PC-9 (cell line): ENCODE measurements at regions of chr6 and their contacts with region 1.

Region 1: GRCh38 chr6:157756708-157757429 is 66.2 kb upstream of the SNX9 start:
- DNase-seq: peak; percentile 43 to 73
- H3K4me3 ChIP-seq: no peak overlapping the region
- H3K27ac ChIP-seq: no peak overlapping the region
- H3K4me1 ChIP-seq: peaks cover 39% of the 10 kb centered on the region
- H3K27me3 ChIP-seq: no peaks in the 10 kb centered on the region
- CTCF ChIP-seq: peak; percentile 87

Region 2: GRCh38 chr6:157323255-157323965 is 433.5 kb before region 1 on chr6 and contains the start of gene TMEM242:
- CTCF ChIA-PET with region 1: interaction called, 16 read pairs
- POLR2A ChIA-PET with region 1: no interaction called
- intact Hi-C with region 1: loop called (anchors 10 kb)
- DNase-seq: peak; percentile 81 to 90
- H3K4me3 ChIP-seq: peak within 1 kb of the TSS; percentile 97
- H3K27ac ChIP-seq: peak within 1 kb of the TSS; percentile 64
- H3K4me1 ChIP-seq: peaks cover 23% of the 10 kb centered on the region
- H3K27me3 ChIP-seq: no peaks in the 10 kb centered on the region
- CTCF ChIP-seq: peak; percentile 51; the same call in 1 of the 2 replicates
- total RNA-seq, gene TMEM242: 8.1 and 8.7 TPM in 2 replicates

Region 3: GRCh38 chr6:157774153-157775135 is 17.6 kb after region 1 on chr6:
- CTCF ChIA-PET with region 1: no interaction called
- POLR2A ChIA-PET with region 1: no interaction called
- intact Hi-C with region 1: no loop called
- DNase-seq: no peak
- H3K4me3 ChIP-seq: no peak overlapping the region
- H3K27ac ChIP-seq: no peak overlapping the region
- H3K4me1 ChIP-seq: peaks cover 24% of the 10 kb centered on the region
- H3K27me3 ChIP-seq: no peaks in the 10 kb centered on the region
- CTCF ChIP-seq: no peak

Region 4: DNA sequence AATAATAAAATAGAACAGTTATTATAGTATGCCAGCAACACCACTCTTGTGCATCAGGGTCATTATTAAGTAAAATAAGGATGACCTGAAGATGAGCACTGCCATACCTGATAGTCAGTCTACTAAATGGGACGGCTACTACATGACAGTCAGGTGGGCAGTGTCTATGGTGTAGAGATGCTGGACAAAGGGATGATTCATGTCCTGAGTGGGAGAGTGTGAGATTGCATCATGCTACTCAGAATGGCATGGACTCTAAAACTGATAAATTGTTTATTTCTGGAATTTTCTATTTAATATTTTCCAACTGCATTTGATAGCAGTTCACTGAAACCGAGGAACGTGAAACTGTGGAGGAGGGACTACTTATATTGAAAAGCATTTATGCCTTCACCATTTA is 104.9 kb after region 1 on chr6:
- CTCF ChIA-PET with region 1: no interaction called
- POLR2A ChIA-PET with region 1: no interaction called
- intact Hi-C with region 1: no loop called
- DNase-seq: no peak
- H3K4me3 ChIP-seq: no peak overlapping the region
- H3K27ac ChIP-seq: no peak overlapping the region
- H3K4me1 ChIP-seq: no peaks in the 10 kb centered on the region
- H3K27me3 ChIP-seq: no peaks in the 10 kb centered on the region
- CTCF ChIP-seq: no peak

Region 5: DNA sequence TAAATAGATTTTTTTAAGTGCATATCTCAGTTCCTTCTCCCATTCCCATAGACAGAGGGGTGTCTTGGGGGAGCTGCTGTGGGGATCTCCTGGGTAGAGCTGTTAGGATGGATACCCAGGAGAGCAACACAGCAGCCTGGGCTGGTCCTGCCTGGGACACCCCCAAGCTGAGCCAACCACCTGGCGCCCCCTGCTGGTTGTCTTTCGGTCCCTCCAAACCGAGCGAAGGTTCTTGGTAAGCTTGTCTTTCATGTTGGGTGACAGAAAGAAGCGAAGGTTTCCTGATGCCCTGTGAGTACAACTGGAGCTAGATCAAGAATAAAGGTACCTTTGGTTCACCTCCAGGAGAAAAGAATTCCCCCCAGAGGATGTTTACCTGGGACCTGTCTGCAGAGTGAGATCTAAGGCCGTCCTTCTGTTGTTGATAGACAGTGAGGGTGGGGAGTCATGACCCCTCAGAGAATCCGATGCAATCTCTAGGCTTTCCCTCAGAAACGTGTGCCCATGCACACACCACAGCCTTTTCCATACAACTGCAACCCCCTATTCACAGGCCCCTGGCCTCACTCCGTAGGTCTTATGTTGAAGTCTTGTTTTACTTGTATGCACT is 117.0 kb after region 1 on chr6:
- CTCF ChIA-PET with region 1: interaction called, 5 read pairs
- POLR2A ChIA-PET with region 1: no interaction called
- intact Hi-C with region 1: loop called (anchors 1 kb)
- DNase-seq: peak; percentile 59 to 65
- H3K4me3 ChIP-seq: no peak overlapping the region
- H3K27ac ChIP-seq: no peak overlapping the region
- H3K4me1 ChIP-seq: no peaks in the 10 kb centered on the region
- H3K27me3 ChIP-seq: no peaks in the 10 kb centered on the region
- CTCF ChIP-seq: peak; percentile 87

Region 6: DNA sequence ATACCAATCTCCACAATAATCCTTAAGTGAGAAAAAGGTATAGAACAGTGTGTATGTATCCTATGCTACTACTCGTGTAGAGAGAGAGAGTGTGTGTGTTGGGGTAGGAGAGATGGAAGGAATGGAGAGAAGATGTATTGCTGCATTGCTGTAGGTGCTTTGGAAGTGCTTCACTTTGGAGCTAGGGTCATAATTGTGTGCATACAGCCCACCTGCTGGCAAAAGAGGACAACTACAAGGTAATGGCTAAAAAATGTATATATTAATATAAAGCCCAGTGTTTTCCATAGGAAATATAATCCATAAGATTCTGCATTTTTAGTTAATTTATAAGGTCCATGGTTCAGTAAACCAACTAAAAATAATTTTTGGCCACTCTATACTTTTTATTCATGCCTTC is 375.1 kb after region 1 on chr6:
- CTCF ChIA-PET with region 1: no interaction called
- POLR2A ChIA-PET with region 1: no interaction called
- intact Hi-C with region 1: loop called (anchors 5 kb)
- DNase-seq: no peak
- H3K4me3 ChIP-seq: no peak overlapping the region
- H3K27ac ChIP-seq: no peak overlapping the region
- H3K4me1 ChIP-seq: no peaks in the 10 kb centered on the region
- H3K27me3 ChIP-seq: no peaks in the 10 kb centered on the region
- CTCF ChIP-seq: peak; percentile 73